AG04449 (cell line): ENCODE measurements at regions of chr3 and their contacts with region 1.

Region 1: GRCh38 chr3:16290007-16290826 is 25.2 kb downstream of the OXNAD1 start:
- DNase-seq: no peak
- H3K4me3 ChIP-seq: no peak overlapping the region
- CTCF ChIP-seq: peak; percentile 62

Region 2: GRCh38 chr3:15923640-15924405 is 366.4 kb before region 1 on chr3:
- CTCF ChIA-PET with region 1: no interaction called
- POLR2A ChIA-PET with region 1: no interaction called
- DNase-seq: no peak
- H3K4me3 ChIP-seq: no peak overlapping the region
- CTCF ChIP-seq: no peak

Region 3: GRCh38 chr3:16148783-16149182 is 141.4 kb before region 1 on chr3:
- CTCF ChIA-PET with region 1: no interaction called
- POLR2A ChIA-PET with region 1: no interaction called
- DNase-seq: peak; percentile 51
- H3K4me3 ChIP-seq: no peak overlapping the region
- CTCF ChIP-seq: no peak

Region 4: DNA sequence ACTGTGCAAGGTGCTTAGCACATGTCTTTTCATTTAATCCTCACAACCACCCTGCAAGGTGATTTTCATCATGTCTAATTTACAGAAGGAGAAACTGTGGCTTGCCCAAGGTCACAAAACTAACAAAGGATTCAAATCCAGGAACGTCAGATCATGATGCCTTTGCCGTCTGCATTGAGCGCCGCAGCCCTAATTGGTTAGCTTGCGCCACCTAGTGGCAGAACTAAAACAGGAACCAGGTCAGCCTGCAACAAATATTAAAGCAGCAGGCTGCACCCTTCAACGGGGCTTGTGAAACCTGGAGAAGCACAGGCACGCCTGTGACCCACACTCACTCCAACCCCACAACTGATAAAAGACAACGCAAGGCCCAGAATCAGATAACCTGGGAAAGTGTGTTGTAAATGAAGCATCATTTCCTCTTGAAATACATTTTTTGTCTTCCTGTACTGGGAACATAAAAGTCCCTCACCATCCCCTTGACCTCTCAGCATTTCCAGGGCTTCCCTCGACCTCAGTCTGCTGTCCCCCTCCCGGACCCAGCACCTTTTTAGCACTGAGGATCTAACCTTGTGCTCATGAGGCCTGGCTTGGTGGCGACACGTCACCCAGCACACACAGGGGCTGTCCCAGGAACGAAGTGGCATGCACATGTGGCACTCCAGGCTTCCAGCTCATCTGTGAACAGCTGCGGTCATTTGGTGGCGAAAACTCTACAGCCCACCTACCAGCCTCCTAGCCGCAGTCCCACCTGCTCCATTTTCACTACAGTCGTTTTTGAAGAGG is 42.7 kb before region 1 on chr3:
- CTCF ChIA-PET with region 1: no interaction called
- POLR2A ChIA-PET with region 1: no interaction called
- DNase-seq: peak; percentile 31
- H3K4me3 ChIP-seq: no peak overlapping the region
- CTCF ChIP-seq: peak; percentile 82

Region 5: DNA sequence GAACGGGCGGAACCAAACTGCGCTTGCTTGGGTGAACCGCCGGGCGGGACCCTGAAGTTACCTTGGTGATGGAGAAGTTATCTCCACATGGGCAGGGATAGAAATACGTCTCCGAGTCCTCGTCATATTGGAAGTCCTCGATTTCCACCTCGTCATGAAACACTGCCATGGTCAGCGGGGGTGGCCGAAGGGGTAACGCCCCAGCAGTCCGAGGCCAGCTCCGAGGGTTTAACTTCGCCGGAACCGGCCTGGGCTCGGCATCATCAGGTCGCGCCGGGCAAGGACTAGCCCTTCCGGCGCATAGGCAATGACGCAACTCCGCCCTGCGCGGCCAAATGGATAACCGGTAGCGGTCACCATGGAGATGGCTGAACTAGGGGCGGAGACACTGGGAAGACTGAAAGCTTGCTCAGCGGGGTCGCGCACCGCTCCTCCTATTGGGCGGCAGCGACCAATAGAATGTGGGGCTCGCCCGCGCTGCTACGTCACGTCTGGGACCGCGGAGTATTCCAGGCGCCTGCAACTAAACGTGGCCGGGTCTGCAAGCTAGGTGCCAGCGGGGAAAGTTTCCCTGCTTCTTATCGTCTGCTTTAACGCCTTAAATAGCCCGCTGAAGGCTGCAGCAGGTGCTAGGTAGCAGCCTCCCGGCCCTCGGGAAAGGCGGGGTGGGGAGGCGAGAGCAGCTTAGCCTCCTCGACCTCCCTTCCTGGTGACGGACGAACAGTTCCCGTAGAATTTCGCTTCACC is 25.3 kb before region 1 on chr3 and contains the starts of genes DPH3 and OXNAD1:
- CTCF ChIA-PET with region 1: interaction called, 81 read pairs
- POLR2A ChIA-PET with region 1: interaction called, 3 read pairs
- DNase-seq: peak; percentile 97
- H3K4me3 ChIP-seq: peak within 1 kb of the TSS; percentile 98
- CTCF ChIP-seq: no peak

Region 6: GRCh38 chr3:16496408-16497222 is 206.4 kb after region 1 on chr3:
- CTCF ChIA-PET with region 1: interaction called, 10 read pairs
- POLR2A ChIA-PET with region 1: no interaction called
- DNase-seq: no peak
- H3K4me3 ChIP-seq: no peak overlapping the region
- CTCF ChIP-seq: no peak

Region 7: DNA sequence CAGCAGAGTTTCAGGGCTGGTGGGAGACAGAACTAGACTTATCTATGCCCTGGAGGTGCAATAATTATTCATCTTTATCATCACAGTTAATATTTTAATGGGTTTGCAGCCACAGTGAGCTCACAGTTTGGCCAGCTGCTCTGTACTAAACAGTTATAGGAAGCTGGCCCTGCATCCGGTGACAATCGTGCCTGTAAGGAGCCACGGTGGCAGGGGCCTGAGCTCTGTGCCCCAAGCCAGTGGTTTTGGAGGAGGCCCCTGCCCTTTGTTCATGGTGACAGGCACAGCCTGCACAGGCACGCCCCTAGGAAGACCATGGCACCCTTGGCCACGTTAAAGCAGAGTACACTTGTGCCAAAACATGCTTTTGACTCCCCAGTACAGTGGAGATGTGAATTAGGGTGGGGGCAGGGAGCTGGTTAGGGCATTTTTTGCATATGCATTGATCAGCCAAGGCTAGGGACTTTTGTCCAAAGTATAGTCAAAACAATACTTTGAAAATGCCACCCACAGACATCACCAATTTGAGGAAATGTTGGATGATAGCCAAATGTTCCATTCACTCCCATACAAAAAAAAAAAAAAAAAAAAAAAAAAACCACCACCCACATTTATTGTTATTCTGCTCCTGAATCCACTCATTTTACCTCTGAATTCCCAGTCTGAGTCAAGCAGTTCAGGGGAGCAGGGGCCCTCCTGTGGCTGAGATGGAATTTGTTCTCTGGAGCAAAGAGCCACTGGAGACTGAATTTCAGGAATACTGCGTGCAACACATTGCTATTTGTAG is 226.7 kb after region 1 on chr3:
- CTCF ChIA-PET with region 1: interaction called, 166 read pairs
- POLR2A ChIA-PET with region 1: interaction called, 3 read pairs
- DNase-seq: no peak
- H3K4me3 ChIP-seq: no peak overlapping the region
- CTCF ChIP-seq: peak; percentile 80

Region 8: DNA sequence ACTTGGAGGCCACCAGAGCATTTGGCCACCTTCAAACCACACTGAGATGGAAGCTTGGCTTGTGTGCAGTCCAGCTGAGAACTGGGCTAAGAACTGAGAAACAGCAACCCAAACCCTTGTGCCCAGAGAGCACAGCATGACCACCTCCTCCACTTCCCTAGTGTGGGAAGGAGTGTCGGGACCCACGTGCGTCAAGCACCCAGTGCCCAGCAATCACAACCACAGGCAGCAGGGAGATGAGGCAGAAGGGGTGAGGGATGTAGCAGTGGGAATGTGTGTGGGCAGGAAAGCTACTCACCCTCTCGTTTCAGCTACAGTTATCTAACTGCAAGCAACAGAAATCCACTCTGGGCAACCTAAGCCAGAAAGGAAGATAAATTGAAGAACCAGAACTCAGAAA is 248.3 kb after region 1 on chr3:
- CTCF ChIA-PET with region 1: interaction called, 24 read pairs
- POLR2A ChIA-PET with region 1: no interaction called
- DNase-seq: no peak
- H3K4me3 ChIP-seq: no peak overlapping the region
- CTCF ChIP-seq: no peak